ENCODE measurements at regions of chr15 and their contacts with region 1.

Region 1: GRCh38 chr15:73982222-73982962 is 9.7 kb downstream of the STOML1 start:
- DNase-seq: peak; percentile 65 to 96 (median 85)
- H3K4me3 ChIP-seq: no peak overlapping the region
- H3K27ac ChIP-seq: peak overlapping the region; percentile 79 to 85
- H3K4me1 ChIP-seq: peaks cover 0 to 33% (median 13%) of the 10 kb centered on the region in 3 donors
- H3K27me3 ChIP-seq: no peaks in the 10 kb centered on the region
- CTCF ChIP-seq: no peak

Region 2: DNA sequence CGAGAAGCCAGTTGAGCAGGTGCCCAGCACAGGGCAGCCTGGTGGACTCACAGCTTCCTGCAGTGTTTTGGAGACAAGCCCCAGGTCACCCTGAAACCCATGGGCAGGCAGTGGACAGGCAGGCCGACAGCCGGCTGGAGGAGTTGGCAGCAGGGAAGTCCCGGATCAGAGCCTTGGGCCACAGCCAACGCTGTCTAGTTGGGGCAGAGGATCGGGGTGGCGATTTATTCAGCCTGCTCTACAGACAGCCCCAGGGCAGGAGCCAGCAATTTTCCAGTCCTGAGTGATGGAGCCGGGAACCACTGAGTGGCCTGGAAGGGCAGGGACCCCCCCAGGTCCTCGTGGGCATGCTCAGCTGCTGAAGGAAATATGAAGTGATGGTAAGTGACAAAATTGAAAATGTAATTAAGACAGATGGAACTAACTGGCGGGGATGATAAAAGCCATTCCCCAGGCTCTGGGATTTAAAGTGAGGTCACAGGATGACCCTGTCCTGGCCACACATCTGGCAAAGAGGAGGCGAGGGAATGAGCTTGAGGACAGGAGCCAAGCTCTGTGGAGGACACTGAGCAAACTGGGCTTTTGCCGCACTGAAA is 143.5 kb before region 1 on chr15:
- intact Hi-C with region 1: no loop called
- DNase-seq: peak in 2 of 5 donors; percentile 58 to 82
- H3K4me3 ChIP-seq: no peak overlapping the region
- H3K27ac ChIP-seq: no peak overlapping the region
- H3K4me1 ChIP-seq: peaks cover 0 to 2% (median 0%) of the 10 kb centered on the region in 3 donors
- H3K27me3 ChIP-seq: peaks cover 2% of the 10 kb centered on the region
- CTCF ChIP-seq: no peak

Region 3: DNA sequence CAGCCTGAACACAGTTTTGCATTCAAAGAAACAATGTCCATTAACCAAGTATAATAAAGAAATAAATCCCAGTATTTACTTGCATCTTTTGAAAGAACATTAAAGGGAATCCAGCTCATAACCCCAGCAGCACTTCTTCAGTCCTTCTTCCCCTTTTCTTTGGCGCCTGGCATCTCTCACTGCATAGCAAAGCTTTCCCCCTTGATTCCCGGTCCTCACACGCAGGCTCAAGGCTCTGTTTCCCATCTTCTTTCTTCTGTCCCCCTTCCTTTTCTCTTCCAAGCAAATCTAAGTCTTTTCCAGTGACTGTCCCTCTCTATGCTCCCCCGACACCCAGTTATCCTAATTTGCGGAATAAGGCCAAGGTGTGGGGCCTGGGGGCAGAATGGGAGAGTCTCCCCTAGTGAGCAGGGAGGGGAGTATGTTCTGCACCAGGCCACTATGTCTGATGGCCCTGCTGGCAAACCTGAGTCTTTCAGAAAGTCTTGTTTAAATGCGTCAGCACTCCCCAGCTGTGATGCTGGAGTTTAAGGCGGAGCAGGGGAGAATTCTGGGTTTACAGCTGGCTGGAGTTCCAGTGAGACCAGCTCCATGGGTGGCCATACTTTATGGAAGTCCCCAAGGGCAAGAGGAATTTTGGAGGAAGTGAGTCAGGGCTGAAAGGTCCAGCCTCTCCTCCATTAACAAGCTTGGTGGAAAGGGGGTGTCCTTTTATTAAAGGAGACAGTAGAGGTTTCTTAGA is 57.9 kb after region 1 on chr15:
- intact Hi-C with region 1: loop called (anchors 10 kb)
- DNase-seq: peak in 4 of 5 donors; percentile 39 to 91 (median 68)
- H3K4me3 ChIP-seq: no peak overlapping the region
- H3K27ac ChIP-seq: peak overlapping the region; percentile 68 to 81
- H3K4me1 ChIP-seq: peaks cover 0 to 13% (median 0%) of the 10 kb centered on the region in 3 donors
- H3K27me3 ChIP-seq: no peaks in the 10 kb centered on the region
- CTCF ChIP-seq: no peak

Region 4: DNA sequence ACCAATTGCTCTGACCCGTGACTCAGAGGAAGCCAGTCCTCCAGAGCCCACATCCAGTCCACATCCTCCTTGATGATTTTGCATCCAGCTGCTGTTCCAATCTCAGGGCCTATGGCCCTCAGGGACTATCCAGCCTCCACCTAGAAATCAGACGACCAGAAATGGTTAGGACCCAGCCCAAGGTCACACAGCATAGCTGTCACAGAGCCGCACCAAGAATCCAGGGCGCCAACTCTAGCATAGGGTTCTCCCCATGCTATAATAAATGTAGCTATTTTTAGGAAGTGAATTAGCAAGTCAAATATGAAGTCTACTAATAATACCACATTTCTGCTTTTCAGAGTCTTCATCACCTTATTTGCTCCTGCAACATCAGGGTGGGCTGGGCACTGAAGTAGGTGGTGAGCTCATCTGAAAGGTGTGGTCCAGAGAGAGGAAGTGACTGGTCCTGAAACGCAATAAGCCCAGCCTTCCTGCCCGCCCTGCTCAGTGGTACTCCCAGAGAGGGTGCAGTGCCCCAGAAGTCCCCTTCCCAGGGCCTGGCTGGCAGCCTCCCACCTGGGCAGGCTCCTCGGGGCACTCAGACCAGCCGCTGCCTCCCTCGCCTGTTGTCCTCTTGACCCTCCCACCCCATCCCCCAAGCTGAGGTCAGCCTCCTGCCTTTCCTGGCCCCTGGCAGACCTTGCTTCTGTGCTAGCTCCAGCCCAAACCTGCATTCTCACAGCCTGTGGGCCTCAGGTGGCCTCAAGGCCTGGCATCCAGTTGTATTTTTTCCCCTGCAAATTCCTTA is 402.7 kb after region 1 on chr15:
- intact Hi-C with region 1: no loop called
- DNase-seq: peak in 2 of 5 donors; percentile 41 to 56
- H3K4me3 ChIP-seq: no peak overlapping the region
- H3K27ac ChIP-seq: peak overlapping the region; percentile 67 to 69
- H3K4me1 ChIP-seq: peaks cover 0 to 28% (median 9%) of the 10 kb centered on the region in 3 donors
- H3K27me3 ChIP-seq: no peaks in the 10 kb centered on the region
- CTCF ChIP-seq: no peak